ENCODE measurements at regions of chr5 and their contacts with region 1.

Region 1: GRCh38 chr5:135551593-135552447 is 16.1 kb upstream of the NEUROG1 start:
- DNase-seq: peak; percentile 84
- H3K27ac ChIP-seq: no peak overlapping the region
- CTCF ChIP-seq: peak; percentile 95

Region 2: GRCh38 chr5:135476615-135477582 is 74.9 kb before region 1 on chr5:
- CTCF ChIA-PET with region 1: interaction called, 10 read pairs
- POLR2A ChIA-PET with region 1: no interaction called
- DNase-seq: no peak
- H3K27ac ChIP-seq: no peak overlapping the region
- CTCF ChIP-seq: no peak

Region 3: GRCh38 chr5:135729321-135729786 is 177.5 kb after region 1 on chr5:
- CTCF ChIA-PET with region 1: interaction called, 20 read pairs
- POLR2A ChIA-PET with region 1: no interaction called
- DNase-seq: peak; percentile 65
- H3K27ac ChIP-seq: no peak overlapping the region
- CTCF ChIP-seq: no peak

Region 4: DNA sequence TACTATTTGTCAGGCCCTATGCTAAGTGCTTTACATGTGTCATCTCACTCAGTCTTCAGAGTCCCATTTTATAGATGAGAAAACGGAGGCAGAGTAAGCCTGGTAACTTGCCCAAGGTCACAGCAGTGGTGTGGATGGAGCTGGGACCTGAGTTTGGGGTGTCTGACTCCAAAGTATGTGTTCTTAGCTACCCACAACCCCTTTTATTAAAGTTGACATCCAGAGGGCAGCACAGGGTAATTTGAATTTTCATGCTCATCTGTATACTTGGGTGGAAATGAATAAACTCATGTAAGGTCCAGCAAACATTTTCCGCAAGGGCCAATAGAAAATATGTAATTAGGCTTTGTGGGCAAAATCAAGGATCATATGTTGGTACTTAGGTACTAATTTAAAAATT is 189.2 kb after region 1 on chr5:
- CTCF ChIA-PET with region 1: no interaction called
- POLR2A ChIA-PET with region 1: no interaction called
- DNase-seq: no peak
- H3K27ac ChIP-seq: no peak overlapping the region
- CTCF ChIP-seq: no peak

Region 5: DNA sequence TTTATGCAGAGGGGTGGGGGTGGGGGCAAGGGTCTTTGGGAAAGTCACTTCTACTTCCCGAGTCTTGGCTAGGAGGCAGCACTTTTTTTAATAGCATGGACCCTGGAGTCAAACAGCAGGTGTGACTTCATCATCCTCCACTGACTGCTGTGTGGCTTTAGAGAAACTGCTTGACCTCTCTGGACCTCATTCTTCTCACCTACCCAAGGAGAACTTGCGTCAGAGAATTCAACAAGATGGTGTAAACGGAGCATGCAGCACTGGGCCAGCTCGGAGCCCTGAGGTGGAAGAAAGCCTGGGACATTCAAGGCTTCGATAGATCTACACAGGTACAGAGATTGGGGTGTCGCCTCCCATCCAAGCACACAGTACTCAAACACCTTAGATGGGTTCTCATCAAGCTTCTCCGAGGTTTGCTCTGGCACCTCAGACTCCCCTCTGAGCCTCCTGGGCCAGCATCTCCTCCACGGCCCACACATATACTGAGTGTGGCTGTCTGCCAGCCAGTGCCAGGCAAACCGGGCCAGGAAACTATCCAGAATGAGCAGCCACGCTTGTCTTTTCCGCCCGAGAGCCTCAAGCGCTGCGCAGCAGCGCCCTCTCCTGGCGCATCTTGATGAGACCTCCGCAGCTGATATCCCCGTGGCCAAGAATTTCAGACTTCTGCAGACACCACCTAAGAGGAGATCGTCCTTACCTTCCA is 278.0 kb after region 1 on chr5:
- CTCF ChIA-PET with region 1: interaction called, 27 read pairs
- POLR2A ChIA-PET with region 1: no interaction called
- DNase-seq: peak; percentile 82
- H3K27ac ChIP-seq: no peak overlapping the region
- CTCF ChIP-seq: peak; percentile 84

Region 6: DNA sequence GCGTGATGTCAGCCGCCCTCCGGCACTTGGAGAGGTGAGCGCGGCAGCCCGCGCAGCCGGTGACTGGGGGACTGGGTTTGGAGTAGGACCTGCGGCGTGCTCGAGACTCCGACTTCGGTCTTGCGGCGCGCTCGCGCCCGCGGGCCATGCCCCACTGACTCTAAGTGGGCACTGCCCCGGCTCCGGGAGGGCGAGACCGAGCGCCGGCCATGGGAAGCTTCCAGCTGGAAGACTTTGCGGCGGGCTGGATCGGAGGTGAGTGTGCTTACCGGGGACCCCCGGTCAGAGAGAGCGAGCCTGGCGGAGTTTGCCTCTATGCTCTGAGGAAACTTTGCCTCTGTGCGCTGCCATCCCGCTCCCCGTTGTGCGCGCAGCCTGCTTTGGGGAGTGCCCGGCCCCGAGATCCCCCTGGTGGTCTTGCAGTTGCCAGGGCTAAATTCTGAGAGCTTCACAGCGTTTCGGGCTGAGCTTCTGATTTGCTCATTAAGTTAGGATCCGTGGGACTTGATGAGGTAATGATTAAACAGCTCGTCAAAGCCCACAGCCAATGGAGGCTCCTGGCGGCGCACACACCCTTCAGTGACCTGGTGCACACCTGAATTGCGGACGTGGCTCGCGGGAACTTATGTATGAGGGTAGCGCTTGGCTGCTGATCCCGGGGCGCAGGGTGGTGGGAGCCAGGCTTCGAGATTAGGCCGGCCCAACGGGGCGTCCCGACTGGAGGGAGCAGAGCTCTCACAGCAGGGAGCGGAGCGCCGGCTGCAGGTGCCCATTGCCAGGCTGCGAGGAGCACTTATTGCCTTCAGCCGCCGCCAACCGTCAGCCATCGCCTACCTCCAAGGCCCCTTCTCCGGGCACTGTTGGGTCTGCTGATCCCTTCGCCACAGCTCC is 283.1 kb after region 1 on chr5 and contains the start of gene SLC25A48:
- CTCF ChIA-PET with region 1: interaction called, 27 read pairs
- POLR2A ChIA-PET with region 1: no interaction called
- DNase-seq: peak; percentile 84
- H3K27ac ChIP-seq: no peak within 1 kb of the TSS
- CTCF ChIP-seq: peak; percentile 62